Activated CD4-positive, alpha-beta T cell treated with anti-CD3 and anti-CD28 coated beads, Interleukin-2, amount 10 ng/mL, durations not matched to agents 7 days and 5 days (primary cell): ENCODE measurements at regions of chr1 and their contacts with region 1.

Region 1: GRCh38 chr1:203304919-203305808 is at the start of gene BTG2:
- DNase-seq: peak; percentile 91
- H3K4me3 Mint-ChIP-seq: peak within 1 kb of the TSS; percentile 96
- H3K27ac Mint-ChIP-seq: peak within 1 kb of the TSS; percentile 96
- H3K4me1 Mint-ChIP-seq: peaks cover 57% of the 10 kb centered on the region
- H3K27me3 Mint-ChIP-seq: no peaks in the 10 kb centered on the region
- total RNA-seq, gene BTG2: 73.6 to 82.3 TPM

Region 2: GRCh38 chr1:203006948-203007871 is 298.0 kb before region 1 on chr1 and contains the start of gene TMEM183A:
- CTCF ChIA-PET with region 1: no interaction called
- POLR2A ChIA-PET with region 1: no interaction called
- DNase-seq: peak; percentile 98
- H3K4me3 Mint-ChIP-seq: peak within 1 kb of the TSS; percentile 94
- H3K27ac Mint-ChIP-seq: peak within 1 kb of the TSS; percentile 96
- H3K4me1 Mint-ChIP-seq: peaks cover 31% of the 10 kb centered on the region
- H3K27me3 Mint-ChIP-seq: no peaks in the 10 kb centered on the region
- total RNA-seq, gene TMEM183A: 68.3 to 72.2 TPM

Region 3: GRCh38 chr1:203290261-203291089 is 14.7 kb before region 1 on chr1:
- CTCF ChIA-PET with region 1: interaction called, 73 read pairs
- POLR2A ChIA-PET with region 1: interaction called, 20 read pairs
- DNase-seq: peak; percentile 97
- H3K4me3 Mint-ChIP-seq: peak overlapping the region; percentile 67
- H3K27ac Mint-ChIP-seq: peak overlapping the region; percentile 99
- H3K4me1 Mint-ChIP-seq: peaks cover 77% of the 10 kb centered on the region
- H3K27me3 Mint-ChIP-seq: no peaks in the 10 kb centered on the region

Region 4: DNA sequence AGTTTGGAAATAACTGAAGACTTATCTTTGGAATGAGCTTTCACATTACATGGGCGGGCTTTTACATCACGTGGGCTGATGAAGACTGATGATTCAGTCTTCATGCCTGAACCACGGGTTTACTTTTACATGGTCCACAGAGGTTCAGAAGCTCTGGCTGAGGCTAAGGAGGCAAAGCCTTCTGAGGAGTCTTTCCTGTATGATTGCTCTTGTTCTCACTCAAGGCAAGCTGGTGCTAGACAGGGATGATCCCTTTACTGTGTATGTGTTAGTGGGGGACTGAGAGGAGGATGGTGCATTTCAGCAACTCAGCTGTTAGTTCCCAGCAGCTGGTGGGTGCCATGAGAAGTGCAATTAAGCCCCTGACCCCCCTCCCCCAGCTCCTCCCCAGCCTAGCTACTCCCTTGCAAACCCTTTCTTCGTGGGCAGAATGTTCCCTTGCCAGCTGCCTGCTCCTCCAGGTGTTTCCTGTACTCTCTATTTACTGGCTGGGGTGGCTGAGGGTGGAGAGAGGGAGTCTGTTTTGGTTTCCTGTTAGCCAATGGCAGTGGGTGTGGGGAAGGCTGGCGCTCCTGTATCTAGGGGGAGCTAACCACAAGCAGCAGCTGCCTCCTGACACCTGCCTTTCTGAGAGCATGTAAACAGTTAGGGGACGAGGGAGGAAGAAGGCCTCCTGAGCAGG is 15.6 kb after region 1 on chr1:
- CTCF ChIA-PET with region 1: interaction called, 144 read pairs
- POLR2A ChIA-PET with region 1: interaction called, 10 read pairs
- DNase-seq: peak; percentile 89
- H3K4me3 Mint-ChIP-seq: peak overlapping the region; percentile 39
- H3K27ac Mint-ChIP-seq: peak overlapping the region; percentile 95
- H3K4me1 Mint-ChIP-seq: peaks cover 78% of the 10 kb centered on the region
- H3K27me3 Mint-ChIP-seq: no peaks in the 10 kb centered on the region

Region 5: DNA sequence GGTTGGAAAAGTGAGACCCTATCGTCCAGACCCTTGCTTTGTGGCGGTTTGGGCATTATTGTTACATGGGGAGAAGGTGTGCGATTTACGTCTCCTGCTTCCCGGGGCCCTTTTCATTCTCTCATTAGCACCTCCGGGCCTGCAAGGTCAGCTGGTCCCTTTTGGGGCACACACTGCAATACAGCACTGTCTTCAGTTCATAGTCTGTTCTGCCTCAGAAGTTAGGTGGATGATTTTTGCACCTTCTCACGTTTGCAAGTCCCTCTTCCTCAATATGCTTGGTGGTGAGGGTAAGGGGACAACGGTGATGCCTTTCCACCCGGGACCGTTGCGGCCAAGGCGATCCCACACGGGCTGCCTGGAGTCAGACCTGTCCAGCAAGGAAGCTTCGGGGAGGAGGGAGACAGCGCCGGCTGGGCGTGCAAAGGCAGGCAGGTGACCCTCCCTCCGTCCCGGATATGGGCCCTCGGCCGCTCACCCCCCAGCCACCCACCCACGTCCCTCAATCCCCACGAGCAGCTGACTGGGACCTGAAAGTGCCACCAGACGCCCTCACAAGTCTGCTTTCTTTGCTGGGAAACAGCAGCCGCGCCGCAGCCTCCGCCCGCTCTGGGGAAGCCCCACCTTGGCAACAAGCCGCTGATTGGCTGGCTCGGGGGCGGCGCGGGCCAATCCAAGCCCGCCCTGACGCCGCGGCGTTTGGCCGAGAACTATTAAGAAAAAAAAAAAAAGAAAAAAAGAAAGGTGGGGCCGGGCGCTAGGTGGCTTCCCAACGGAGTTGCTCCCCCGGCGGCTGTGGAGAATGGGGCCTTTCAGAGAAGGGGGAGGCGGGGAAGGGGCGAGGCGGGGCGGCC is 21.9 kb after region 1 on chr1:
- CTCF ChIA-PET with region 1: interaction called, 144 read pairs
- POLR2A ChIA-PET with region 1: interaction called, 10 read pairs
- DNase-seq: peak; percentile 95
- H3K4me3 Mint-ChIP-seq: peak overlapping the region; percentile 73
- H3K27ac Mint-ChIP-seq: peak overlapping the region; percentile 98
- H3K4me1 Mint-ChIP-seq: peaks cover 64% of the 10 kb centered on the region
- H3K27me3 Mint-ChIP-seq: no peaks in the 10 kb centered on the region